ENCODE measurements at regions of chr1 and their contacts with region 1.

Region 1: DNA sequence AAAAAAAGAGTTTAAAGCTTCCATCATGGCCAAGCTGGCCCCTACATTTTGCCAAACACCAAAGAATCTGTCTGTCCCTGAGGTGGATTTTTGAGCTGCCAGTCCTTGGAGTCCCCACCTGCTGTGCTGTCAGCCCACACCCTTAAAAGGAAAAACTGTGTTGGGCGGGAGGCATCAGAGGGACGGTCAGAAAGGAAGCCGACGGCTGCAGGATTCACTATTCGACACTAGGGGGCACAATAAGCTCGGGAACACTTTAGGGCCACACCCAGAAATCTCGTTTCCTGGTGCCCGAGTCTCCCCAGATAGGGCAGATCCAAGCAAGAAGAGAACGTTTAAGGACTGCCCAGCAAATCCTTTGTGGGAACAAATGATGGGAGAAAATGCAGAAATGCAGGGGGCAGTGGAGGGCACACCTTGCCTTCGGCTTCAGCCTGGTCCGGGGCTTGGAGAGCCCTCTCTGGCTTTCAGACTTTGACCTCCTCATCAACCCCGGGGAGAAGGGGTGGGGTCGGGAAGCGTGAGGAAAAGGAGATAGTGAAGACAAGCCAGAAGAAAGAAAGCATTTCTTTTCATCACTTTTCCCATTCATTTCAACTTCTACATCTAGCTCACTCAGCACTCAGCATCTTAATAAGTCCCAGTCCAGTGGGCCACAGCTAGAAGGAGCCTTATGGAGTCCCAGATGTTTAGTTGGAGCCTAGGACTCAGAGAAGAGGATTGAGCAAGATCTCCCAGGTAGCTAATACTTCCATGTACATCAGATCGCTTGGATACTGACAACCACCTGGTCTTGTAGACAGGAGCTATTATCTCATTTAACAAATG is 5.0 kb upstream of the CTTNBP2NL start:
- DNase-seq: peak; percentile 37 to 89 (median 64)
- ATAC-seq: peak; percentile 81 to 90 (median 85)
- H3K4me3 ChIP-seq: no peak overlapping the region
- H3K4me3 Mint-ChIP-seq: no peak overlapping the region
- H3K27ac ChIP-seq: no peak overlapping the region
- H3K27ac Mint-ChIP-seq: peak overlapping the region in 1 of 2 donors; percentile 44
- H3K4me1 ChIP-seq: peaks cover 0 to 15% of the 10 kb centered on the region in 2 experiments
- H3K4me1 Mint-ChIP-seq: peaks cover 13 to 19% (median 16%) of the 10 kb centered on the region in 3 donors
- H3K27me3 ChIP-seq: peaks cover 2 to 26% of the 10 kb centered on the region in 2 experiments
- H3K27me3 Mint-ChIP-seq: peaks cover 32 to 43% of the 10 kb centered on the region in 2 donors

Region 2: GRCh38 chr1:112458756-112459155 is 67.8 kb after region 1 on chr1:
- CTCF ChIA-PET with region 1: interaction called, 4 to 11 read pairs
- POLR2A ChIA-PET with region 1: interaction called in 1 of 2 experiments, 23 read pairs
- DNase-seq: no peak
- ATAC-seq: no peak
- H3K4me3 ChIP-seq: no peak overlapping the region
- H3K4me3 Mint-ChIP-seq: no peak overlapping the region
- H3K27ac ChIP-seq: no peak overlapping the region
- H3K27ac Mint-ChIP-seq: no peak overlapping the region
- H3K4me1 ChIP-seq: no peaks in the 10 kb centered on the region
- H3K4me1 Mint-ChIP-seq: no peaks in the 10 kb centered on the region
- H3K27me3 ChIP-seq: peaks cover 0 to 3% of the 10 kb centered on the region in 2 experiments
- H3K27me3 Mint-ChIP-seq: peaks cover 4 to 9% of the 10 kb centered on the region in 2 donors

Region 3: DNA sequence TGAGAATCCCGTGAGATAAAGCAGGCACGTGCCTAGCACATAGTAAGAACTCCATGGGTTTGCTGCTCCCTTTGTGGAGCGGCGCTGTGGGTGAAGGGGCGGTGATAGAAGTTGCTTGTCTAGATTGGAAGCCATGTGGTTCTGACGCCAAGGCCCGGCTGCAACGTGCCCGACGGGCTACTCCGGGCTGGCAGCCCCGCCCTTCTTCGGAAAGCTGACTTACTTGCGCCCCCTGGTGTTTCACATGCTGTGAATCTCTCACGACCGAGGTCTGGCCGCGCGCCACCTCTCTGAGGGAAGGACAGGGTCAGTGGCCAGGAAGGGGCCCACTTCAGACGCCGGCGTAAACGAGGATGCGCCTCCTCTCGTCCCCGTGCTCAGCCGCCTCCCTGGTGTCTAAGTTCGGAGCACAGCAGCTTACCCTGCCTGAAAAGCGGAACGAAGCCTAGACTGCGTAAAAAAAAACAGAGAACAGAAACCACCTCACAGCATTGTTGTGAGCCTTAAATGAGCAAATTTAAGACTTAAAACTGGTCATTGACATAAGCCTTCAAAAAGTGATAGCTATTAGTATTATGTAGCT is 75.2 kb after region 1 on chr1:
- CTCF ChIA-PET with region 1: interaction called, 27 to 33 read pairs
- POLR2A ChIA-PET with region 1: interaction called in 1 of 2 experiments, 3 read pairs
- DNase-seq: peak; percentile 56 to 92 (median 77)
- ATAC-seq: peak; percentile 91 to 96 (median 94)
- H3K4me3 ChIP-seq: peak overlapping the region; percentile 44 to 58
- H3K4me3 Mint-ChIP-seq: peak overlapping the region; percentile 71 to 74 (median 72)
- H3K27ac ChIP-seq: no peak overlapping the region
- H3K27ac Mint-ChIP-seq: peak overlapping the region; percentile 36 to 40
- H3K4me1 ChIP-seq: peaks cover 3 to 8% of the 10 kb centered on the region in 2 experiments
- H3K4me1 Mint-ChIP-seq: peaks cover 9 to 13% (median 12%) of the 10 kb centered on the region in 3 donors
- H3K27me3 ChIP-seq: peaks cover 0 to 20% of the 10 kb centered on the region in 2 experiments
- H3K27me3 Mint-ChIP-seq: peaks cover 12 to 24% of the 10 kb centered on the region in 2 donors